Stomach (tissue), 19 donors: ENCODE measurements at regions of chr4 and their contacts with region 1.

Region 1: DNA sequence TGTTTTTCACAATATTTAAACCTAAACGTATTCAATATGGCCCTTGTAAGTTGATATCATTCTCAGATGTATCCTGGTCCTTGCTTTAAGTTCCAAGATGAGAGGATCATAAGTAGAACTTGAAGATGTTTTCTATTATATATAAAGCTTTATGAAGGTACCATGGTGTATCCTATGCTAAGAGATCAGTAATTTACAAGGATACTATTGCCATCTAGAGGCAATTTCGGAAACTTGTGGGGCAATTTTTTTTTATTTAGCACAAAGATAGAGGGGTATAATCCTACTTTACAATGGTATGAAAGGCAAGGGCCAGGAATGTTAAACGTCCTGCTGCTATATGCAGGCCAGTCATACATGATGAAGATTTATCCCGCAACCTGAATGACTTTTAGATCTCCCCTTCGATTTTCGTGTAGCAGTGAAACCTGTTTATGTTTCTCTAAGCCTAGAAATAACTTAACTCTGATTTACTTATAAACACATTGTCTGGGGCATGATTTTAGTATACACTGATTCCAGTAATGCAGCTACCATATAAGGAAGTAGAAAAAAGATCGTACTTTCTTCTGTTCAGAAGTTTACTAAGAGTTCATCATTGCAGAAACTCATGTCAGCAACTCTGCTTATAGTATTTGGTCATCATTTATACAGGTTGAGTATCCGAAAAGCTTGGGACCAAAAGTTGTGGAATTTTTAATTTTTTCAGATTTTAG is 2.6 kb downstream of the SLC25A31 start:
- DNase-seq: peak in 1 of 2 donors; percentile 61
- H3K4me3 ChIP-seq: no peak overlapping the region
- H3K27ac ChIP-seq: no peak overlapping the region
- H3K4me1 ChIP-seq: no peaks in the 10 kb centered on the region
- H3K27me3 ChIP-seq: no peaks in the 10 kb centered on the region
- CTCF ChIP-seq: peak in 4 of 7 experiments; percentile 22 to 60 (median 47)
- EP300 ChIP-seq: no peak
- POLR2A ChIP-seq: no peak

Region 2: GRCh38 chr4:127616898-127617297 is 115.9 kb before region 1 on chr4:
- intact Hi-C with region 1: loop called (anchors 5 kb)
- DNase-seq: no peak
- H3K4me3 ChIP-seq: no peak overlapping the region
- H3K27ac ChIP-seq: no peak overlapping the region
- H3K4me1 ChIP-seq: no peaks in the 10 kb centered on the region
- H3K27me3 ChIP-seq: peaks cover 0 to 16% (median 9%) of the 10 kb centered on the region in 3 donors
- CTCF ChIP-seq: no peak
- EP300 ChIP-seq: no peak
- POLR2A ChIP-seq: no peak

Region 3: DNA sequence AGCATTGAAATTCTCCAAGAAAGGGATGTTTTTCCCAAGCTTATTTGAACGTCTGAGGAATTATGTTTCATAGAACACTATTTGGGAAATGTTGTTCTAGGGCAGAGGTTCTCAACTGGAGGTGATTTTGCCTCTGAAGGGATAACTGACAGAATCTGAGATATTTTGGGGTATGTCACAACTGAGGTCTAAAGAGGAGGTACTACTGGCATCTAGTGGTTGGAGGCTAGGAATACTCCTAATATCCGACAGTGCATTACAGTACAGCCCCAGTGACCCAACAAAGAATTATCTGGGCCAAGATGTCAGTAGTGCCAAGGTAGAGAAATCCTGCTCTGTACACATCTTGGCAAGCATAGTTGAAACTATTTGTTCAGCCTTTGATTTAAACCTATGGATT is 55.7 kb after region 1 on chr4:
- intact Hi-C with region 1: no loop called
- DNase-seq: peak in 1 of 2 donors; percentile 13
- H3K4me3 ChIP-seq: no peak overlapping the region
- H3K27ac ChIP-seq: no peak overlapping the region
- H3K4me1 ChIP-seq: peaks cover 0 to 15% (median 8%) of the 10 kb centered on the region in 4 donors
- H3K27me3 ChIP-seq: no peaks in the 10 kb centered on the region
- CTCF ChIP-seq: no peak
- EP300 ChIP-seq: no peak
- POLR2A ChIP-seq: no peak

Region 4: DNA sequence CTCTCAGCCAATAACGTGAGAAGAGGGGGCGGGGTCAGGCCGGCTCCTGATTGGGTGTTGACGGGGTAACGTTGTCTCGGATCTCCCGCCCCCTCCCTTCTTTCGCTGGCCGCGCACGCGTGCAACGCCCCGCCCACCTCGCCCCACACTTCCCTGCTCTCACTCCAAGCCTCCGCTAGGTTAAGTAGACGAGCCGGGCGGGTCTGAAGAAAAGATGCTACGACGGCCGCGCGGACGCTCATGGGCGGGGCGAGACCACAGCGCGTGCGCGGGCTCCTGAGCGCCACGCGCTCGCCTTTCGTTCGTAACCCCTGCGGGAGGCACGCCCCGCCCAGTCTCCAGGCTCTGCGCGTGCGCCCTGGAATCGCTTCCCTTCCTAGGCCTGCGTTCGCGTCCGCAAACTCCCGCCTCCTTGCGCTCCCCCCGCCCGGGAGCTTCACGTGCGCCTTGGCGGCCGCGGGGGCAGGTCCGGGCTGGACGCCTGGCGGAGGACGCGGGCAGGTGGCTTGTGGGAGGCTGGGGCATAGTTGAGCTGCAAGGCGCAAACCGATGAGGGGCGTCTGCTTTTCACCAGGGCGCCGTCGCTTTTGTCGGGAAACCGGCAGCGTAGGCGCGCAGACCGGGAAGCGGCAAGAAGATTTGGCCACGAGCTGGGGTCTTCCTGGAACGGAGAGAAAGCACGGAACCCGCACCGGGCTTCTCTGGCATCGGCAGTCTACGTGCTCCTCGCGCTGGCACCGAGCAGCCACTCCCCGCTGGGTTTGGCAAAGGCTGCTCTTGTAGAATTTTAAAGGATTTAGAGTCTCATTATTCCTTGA is 555.3 kb after region 1 on chr4:
- intact Hi-C with region 1: no loop called
- DNase-seq: peak; percentile 100
- H3K4me3 ChIP-seq: peak overlapping the region; percentile 62 to 94 (median 86)
- H3K27ac ChIP-seq: peak overlapping the region; percentile 93 to 97 (median 95)
- H3K4me1 ChIP-seq: peaks cover 13 to 49% (median 39%) of the 10 kb centered on the region in 4 donors
- H3K27me3 ChIP-seq: no peaks in the 10 kb centered on the region
- CTCF ChIP-seq: peak in 5 of 7 experiments; percentile 11 to 63 (median 25)
- EP300 ChIP-seq: no peak
- POLR2A ChIP-seq: peak in 1 of 4 donors; percentile 61